Heart left ventricle (tissue), 16 donors: ENCODE measurements at regions of chr3 and their contacts with region 1.

Region 1: DNA sequence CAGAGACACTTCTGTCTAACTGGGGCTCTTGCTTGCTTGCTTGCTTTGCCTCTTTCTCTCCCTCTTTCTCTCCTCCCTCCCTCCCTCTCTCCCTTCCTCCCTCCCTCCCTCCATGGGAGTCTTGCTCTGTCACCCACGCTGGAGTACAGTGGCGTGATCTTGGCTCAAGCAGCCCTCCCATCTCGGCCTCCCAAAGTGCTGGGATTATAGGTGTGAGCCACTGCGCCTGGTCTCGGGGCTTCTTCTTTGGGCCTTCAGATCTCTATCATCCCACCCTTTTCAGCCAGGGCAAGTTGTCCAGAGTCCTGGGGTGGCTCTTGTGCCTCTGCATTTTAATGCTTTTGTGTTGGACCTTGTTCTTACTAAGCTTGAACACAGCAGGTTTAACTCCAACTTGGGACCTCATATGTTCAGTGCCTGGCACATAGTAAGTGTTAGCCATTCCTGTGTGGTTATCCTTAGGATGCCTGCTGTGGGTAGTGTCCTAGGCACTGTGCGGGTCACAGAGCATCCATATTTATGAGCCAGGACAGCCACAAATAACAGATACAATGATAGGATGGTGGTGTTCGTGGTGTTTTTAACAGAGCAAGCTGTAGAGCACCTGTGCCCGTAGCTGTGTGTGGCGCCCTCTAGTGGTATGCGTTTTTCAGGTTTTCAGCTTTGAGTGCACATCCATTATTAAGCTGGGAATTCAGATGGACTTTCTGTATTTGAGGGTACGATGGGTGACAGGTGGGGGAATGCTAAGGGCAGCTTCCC is 75.1 kb downstream of the CCK start:
- DNase-seq: peak in 3 of 5 donors; percentile 52 to 61 (median 52)
- ATAC-seq: peak in 3 of 4 donors; percentile 46 to 58 (median 57)
- H3K4me3 ChIP-seq: no peak overlapping the region
- H3K27ac ChIP-seq: no peak overlapping the region
- H3K4me1 ChIP-seq: peaks cover 0 to 57% (median 31%) of the 10 kb centered on the region in 12 donors
- H3K27me3 ChIP-seq: no peaks in the 10 kb centered on the region
- CTCF ChIP-seq: peak; percentile 74 to 90 (median 84)
- POLR2A ChIP-seq: no peak

Region 2: DNA sequence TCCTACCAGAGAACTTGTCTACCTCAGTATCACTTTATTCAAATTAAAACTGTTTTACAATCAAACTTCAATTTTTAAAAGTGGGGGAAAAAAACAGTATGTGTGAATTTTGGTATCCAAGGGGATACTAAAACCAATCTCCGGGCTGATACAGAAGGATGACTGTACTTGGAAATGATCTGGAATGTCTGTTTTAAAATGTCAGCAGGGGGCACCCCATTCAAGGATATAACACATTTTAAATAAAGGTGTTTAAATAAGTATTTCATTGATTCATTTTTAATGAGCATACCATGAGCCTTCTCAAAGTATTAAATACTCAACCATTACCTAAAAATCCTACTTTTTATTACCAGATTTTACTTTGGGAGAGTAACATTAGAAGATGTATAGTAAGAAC is 296.9 kb before region 1 on chr3:
- intact Hi-C with region 1: loop called in 9 of 10 experiments (anchors 2 to 10 kb)
- DNase-seq: peak in 1 of 5 donors; percentile 12
- ATAC-seq: no peak
- H3K4me3 ChIP-seq: no peak overlapping the region
- H3K27ac ChIP-seq: no peak overlapping the region
- H3K4me1 ChIP-seq: peaks cover 0 to 7% (median 0%) of the 10 kb centered on the region in 12 donors
- H3K27me3 ChIP-seq: no peaks in the 10 kb centered on the region
- CTCF ChIP-seq: peak; percentile 31 to 71 (median 63)
- POLR2A ChIP-seq: no peak

Region 3: GRCh38 chr3:41900265-41900664 is 290.6 kb before region 1 on chr3:
- intact Hi-C with region 1: loop called in 7 of 10 experiments (anchors 2 to 10 kb)
- DNase-seq: no peak
- ATAC-seq: no peak
- H3K4me3 ChIP-seq: no peak overlapping the region
- H3K27ac ChIP-seq: no peak overlapping the region
- H3K4me1 ChIP-seq: peaks cover 0 to 8% (median 0%) of the 10 kb centered on the region in 12 donors
- H3K27me3 ChIP-seq: no peaks in the 10 kb centered on the region
- CTCF ChIP-seq: no peak
- POLR2A ChIP-seq: no peak

Region 4: GRCh38 chr3:42071904-42072592 is 118.8 kb before region 1 on chr3:
- intact Hi-C with region 1: no loop called
- DNase-seq: peak; percentile 75 to 85 (median 79)
- ATAC-seq: peak; percentile 74 to 86 (median 82)
- H3K4me3 ChIP-seq: peak overlapping the region in 11 of 12 donors; percentile 3 to 50 (median 33)
- H3K27ac ChIP-seq: peak overlapping the region; percentile 70 to 96 (median 89)
- H3K4me1 ChIP-seq: peaks cover 33 to 88% (median 82%) of the 10 kb centered on the region in 12 donors
- H3K27me3 ChIP-seq: no peaks in the 10 kb centered on the region
- CTCF ChIP-seq: peak in 3 of 12 donors; percentile 15 to 30 (median 15)
- POLR2A ChIP-seq: no peak

Region 5: DNA sequence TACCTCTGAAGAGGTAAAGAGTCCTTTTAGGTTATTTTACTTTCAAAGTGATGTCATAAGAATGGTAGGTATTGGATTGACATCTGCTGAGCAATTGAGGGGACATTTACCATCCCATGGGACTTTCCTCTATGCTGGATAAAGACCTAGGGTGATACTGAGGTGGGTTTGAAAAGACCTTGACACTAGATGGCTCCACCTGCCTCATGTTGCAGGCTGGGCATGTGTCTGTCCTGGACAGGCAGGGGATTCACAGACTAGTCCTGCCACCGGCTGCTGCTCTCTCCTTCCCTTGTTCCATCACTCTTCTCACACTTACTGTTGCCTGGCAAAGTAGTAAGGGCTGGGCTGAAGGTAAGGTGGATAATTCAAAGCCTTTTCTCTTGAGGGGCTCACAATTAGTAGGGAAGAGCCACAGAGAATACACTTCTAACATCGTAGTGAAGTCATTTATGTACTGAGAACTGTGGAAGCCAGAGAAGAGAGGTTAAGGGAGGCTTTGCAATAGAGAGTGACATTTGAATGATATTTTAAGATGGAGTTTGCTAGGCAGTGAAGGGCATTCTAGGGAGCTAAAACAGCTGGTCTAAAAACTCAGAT is 72.0 kb before region 1 on chr3:
- intact Hi-C with region 1: loop called in 9 of 10 experiments (anchors 1 to 5 kb)
- DNase-seq: peak in 2 of 5 donors; percentile 14 to 54
- ATAC-seq: peak; percentile 59 to 64 (median 60)
- H3K4me3 ChIP-seq: no peak overlapping the region
- H3K27ac ChIP-seq: peak overlapping the region in 7 of 12 donors; percentile 2 to 49 (median 27)
- H3K4me1 ChIP-seq: peaks cover 8 to 93% (median 79%) of the 10 kb centered on the region in 12 donors
- H3K27me3 ChIP-seq: no peaks in the 10 kb centered on the region
- CTCF ChIP-seq: peak in 10 of 12 donors; percentile 20 to 55 (median 40)
- POLR2A ChIP-seq: no peak